Aorta (tissue), 5 donors: ENCODE measurements at regions of chr17 and their contacts with region 1.

Region 1: DNA sequence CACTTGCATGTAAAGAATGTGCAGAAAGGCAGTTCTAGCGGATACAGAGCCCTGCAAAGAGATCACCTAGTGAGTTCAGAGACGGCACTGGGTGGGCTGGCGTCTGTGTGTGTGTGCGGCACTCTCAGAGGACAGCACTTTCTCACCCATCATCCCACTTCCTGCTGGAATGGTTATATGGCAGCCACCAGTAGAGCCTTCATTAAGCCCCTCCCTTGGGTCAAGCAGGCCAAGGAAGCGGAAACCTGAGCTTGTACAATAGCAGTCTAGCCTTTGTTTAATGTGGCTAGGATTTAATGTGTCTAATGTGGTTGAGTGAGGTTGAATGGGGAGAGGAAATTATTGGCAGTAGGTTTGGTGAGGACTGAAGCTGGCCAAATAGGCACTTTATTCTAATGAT is 88.3 kb upstream of the ELAC2 start:
- DNase-seq: no peak
- ATAC-seq: no peak
- H3K4me3 ChIP-seq: no peak overlapping the region
- H3K27ac ChIP-seq: no peak overlapping the region
- H3K4me1 ChIP-seq: no peaks in the 10 kb centered on the region
- H3K27me3 ChIP-seq: no peaks in the 10 kb centered on the region

Region 2: GRCh38 chr17:13044572-13045065 is 61.6 kb before region 1 on chr17:
- intact Hi-C with region 1: loop called in 1 of 2 experiments (anchors 10 kb)
- DNase-seq: no peak
- ATAC-seq: no peak
- H3K4me3 ChIP-seq: no peak overlapping the region
- H3K27ac ChIP-seq: no peak overlapping the region
- H3K4me1 ChIP-seq: no peaks in the 10 kb centered on the region
- H3K27me3 ChIP-seq: no peaks in the 10 kb centered on the region